Activated CD4-positive, alpha-beta T cell treated with anti-CD3 and anti-CD28 coated beads for 36 hours (primary cell): ENCODE measurements at regions of chr20 and their contacts with region 1.

Region 1: DNA sequence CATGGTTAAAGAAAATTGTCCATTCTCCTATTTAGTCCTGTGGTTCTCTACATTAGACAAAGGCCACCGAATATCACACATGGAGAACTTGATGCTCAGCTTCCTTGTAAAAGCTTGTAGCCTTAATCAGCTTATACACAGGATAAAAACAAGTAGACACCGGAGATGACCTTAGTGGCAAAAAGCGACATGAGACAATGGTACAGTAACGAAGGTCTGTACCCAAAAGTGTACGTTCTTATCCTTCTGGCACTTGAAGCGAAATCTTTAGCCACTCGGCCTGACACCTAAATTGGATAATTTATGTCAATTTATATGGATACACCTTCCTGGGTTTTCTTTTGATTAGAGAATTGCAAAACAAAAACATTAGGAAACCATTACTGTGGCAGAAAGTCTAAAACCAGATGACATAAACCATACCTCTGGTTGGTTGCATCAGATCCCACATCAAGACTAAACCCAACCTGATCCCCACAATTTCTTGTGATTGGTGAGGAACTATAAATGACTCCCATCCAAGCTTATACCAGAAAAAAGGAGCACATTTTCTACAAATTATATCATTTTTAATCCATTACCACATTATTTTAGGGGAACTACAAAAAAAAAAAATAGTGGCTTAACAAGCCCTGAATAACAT is 6.1 kb downstream of the RBM39 start:
- DNase-seq: no peak
- ATAC-seq: no peak
- H3K4me3 Mint-ChIP-seq: peak overlapping the region; percentile 23
- H3K27ac Mint-ChIP-seq: peak overlapping the region; percentile 53
- H3K4me1 Mint-ChIP-seq: peaks cover 72% of the 10 kb centered on the region
- H3K27me3 Mint-ChIP-seq: no peaks in the 10 kb centered on the region

Region 2: GRCh38 chr20:35711588-35712209 is 24.2 kb before region 1 on chr20:
- CTCF ChIA-PET with region 1: interaction called, 6 read pairs
- POLR2A ChIA-PET with region 1: interaction called, 7 read pairs
- intact Hi-C with region 1: loop called (anchors 2 kb)
- DNase-seq: no peak
- ATAC-seq: peak; percentile 76
- H3K4me3 Mint-ChIP-seq: peak overlapping the region; percentile 33
- H3K27ac Mint-ChIP-seq: peak overlapping the region; percentile 86
- H3K4me1 Mint-ChIP-seq: peaks cover 48% of the 10 kb centered on the region
- H3K27me3 Mint-ChIP-seq: no peaks in the 10 kb centered on the region

Region 3: GRCh38 chr20:35718972-35719635 is 16.8 kb before region 1 on chr20:
- CTCF ChIA-PET with region 1: interaction called, 6 read pairs
- POLR2A ChIA-PET with region 1: interaction called, 16 read pairs
- intact Hi-C with region 1: loop called in 1 of 2 experiments (anchors 2 kb)
- DNase-seq: no peak
- ATAC-seq: no peak
- H3K4me3 Mint-ChIP-seq: no peak overlapping the region
- H3K27ac Mint-ChIP-seq: no peak overlapping the region
- H3K4me1 Mint-ChIP-seq: peaks cover 42% of the 10 kb centered on the region
- H3K27me3 Mint-ChIP-seq: no peaks in the 10 kb centered on the region